A673 (cell line): ENCODE measurements at regions of chr17 and their contacts with region 1.

Region 1: GRCh38 chr17:40349920-40350909 is 14.3 kb downstream of the GJD3 start:
- DNase-seq: peak; percentile 58
- H3K4me3 ChIP-seq: peak overlapping the region; percentile 10
- H3K27ac ChIP-seq: peak overlapping the region; percentile 79
- H3K4me1 ChIP-seq: peaks cover 60% of the 10 kb centered on the region
- H3K27me3 ChIP-seq: no peaks in the 10 kb centered on the region
- CTCF ChIP-seq: no peak

Region 2: DNA sequence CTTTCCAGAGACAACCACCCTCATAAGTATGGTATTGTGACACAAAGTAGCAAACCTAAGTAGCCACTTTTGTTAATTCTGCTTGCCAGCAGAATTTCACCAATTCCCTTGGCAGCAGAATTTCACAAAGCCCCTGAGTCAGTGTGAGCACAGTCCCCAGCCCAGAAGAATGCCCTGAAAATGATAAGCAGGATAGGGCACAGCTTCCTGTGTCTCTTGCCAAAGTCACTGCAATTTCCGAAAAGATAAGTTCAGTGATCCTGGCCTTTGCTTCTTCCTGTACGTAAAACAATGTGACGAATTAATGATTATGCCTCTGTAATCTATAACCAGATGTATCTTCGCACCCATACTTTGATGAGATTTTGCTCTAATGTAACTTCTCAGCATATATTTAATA is 147.1 kb before region 1 on chr17:
- CTCF ChIA-PET with region 1: no interaction called
- POLR2A ChIA-PET with region 1: no interaction called
- intact Hi-C with region 1: loop called (anchors 5 kb)
- DNase-seq: no peak
- H3K4me3 ChIP-seq: no peak overlapping the region
- H3K27ac ChIP-seq: no peak overlapping the region
- H3K4me1 ChIP-seq: no peaks in the 10 kb centered on the region
- H3K27me3 ChIP-seq: no peaks in the 10 kb centered on the region
- CTCF ChIP-seq: no peak

Region 3: DNA sequence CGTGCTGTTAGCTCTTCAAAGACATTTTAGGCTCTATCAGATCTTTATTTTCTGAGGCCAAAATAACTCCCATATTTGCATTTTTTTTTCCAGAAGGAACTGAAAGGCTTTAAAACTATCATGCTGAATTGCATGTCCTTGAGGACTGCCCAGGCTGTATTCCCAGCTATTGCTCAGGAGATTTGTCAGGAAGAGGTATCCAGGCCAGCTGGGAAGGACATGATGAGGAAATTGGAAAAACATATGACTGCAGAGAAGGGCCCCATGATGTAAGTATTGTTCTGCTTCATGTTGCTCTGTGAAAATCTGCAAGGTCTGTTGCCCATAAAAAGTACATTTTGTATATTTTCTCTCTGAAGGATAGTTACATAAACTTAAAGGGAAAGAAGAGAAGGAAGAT is 56.9 kb before region 1 on chr17:
- CTCF ChIA-PET with region 1: interaction called, 12 read pairs
- POLR2A ChIA-PET with region 1: no interaction called
- intact Hi-C with region 1: no loop called
- DNase-seq: no peak
- H3K4me3 ChIP-seq: no peak overlapping the region
- H3K27ac ChIP-seq: no peak overlapping the region
- H3K4me1 ChIP-seq: peaks cover 6% of the 10 kb centered on the region
- H3K27me3 ChIP-seq: no peaks in the 10 kb centered on the region
- CTCF ChIP-seq: no peak

Region 4: DNA sequence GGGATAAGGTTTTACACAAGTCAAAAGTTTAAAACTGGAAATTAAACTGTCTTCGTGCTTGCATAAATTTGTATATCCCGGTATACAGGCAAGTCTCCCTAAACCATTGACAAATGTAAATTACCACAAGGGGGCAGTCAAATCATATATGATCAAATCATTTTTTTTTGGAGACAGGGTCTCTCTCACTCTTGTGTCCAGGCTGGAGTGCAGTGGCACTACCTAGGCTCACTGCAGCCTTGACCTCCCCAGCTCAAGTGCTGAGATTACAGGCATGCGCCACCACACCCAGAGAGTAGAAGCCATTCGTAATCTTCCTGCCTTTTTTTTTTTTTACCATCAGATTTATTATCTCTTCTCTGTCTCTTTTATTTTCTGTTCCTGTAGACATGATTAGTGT is 49.0 kb after region 1 on chr17:
- CTCF ChIA-PET with region 1: no interaction called
- POLR2A ChIA-PET with region 1: no interaction called
- intact Hi-C with region 1: no loop called
- DNase-seq: peak; percentile 61
- H3K4me3 ChIP-seq: no peak overlapping the region
- H3K27ac ChIP-seq: no peak overlapping the region
- H3K4me1 ChIP-seq: no peaks in the 10 kb centered on the region
- H3K27me3 ChIP-seq: no peaks in the 10 kb centered on the region
- CTCF ChIP-seq: peak; percentile 49